A549 (cell line): ENCODE measurements at regions of chr3 and their contacts with region 1.

Region 1: DNA sequence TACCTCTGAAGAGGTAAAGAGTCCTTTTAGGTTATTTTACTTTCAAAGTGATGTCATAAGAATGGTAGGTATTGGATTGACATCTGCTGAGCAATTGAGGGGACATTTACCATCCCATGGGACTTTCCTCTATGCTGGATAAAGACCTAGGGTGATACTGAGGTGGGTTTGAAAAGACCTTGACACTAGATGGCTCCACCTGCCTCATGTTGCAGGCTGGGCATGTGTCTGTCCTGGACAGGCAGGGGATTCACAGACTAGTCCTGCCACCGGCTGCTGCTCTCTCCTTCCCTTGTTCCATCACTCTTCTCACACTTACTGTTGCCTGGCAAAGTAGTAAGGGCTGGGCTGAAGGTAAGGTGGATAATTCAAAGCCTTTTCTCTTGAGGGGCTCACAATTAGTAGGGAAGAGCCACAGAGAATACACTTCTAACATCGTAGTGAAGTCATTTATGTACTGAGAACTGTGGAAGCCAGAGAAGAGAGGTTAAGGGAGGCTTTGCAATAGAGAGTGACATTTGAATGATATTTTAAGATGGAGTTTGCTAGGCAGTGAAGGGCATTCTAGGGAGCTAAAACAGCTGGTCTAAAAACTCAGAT is 27.7 kb downstream of the TRAK1 start:
- DNase-seq: peak; percentile 63 to 72
- ATAC-seq: peak; percentile 94
- H3K4me3 ChIP-seq: no peak overlapping the region
- H3K27ac ChIP-seq: 0 out of 6 replicates have a peak overlapping the region, but pooled peaks of 1 of the 2 experiments have one; percentile 29
- H3K4me1 ChIP-seq: peaks cover 15% of the 10 kb centered on the region
- CTCF ChIP-seq: peak; percentile 63
- EP300 ChIP-seq: no peak
- POLR2A ChIP-seq: no peak
- RAD21 ChIP-seq: peak; percentile 70 to 78

Region 2: DNA sequence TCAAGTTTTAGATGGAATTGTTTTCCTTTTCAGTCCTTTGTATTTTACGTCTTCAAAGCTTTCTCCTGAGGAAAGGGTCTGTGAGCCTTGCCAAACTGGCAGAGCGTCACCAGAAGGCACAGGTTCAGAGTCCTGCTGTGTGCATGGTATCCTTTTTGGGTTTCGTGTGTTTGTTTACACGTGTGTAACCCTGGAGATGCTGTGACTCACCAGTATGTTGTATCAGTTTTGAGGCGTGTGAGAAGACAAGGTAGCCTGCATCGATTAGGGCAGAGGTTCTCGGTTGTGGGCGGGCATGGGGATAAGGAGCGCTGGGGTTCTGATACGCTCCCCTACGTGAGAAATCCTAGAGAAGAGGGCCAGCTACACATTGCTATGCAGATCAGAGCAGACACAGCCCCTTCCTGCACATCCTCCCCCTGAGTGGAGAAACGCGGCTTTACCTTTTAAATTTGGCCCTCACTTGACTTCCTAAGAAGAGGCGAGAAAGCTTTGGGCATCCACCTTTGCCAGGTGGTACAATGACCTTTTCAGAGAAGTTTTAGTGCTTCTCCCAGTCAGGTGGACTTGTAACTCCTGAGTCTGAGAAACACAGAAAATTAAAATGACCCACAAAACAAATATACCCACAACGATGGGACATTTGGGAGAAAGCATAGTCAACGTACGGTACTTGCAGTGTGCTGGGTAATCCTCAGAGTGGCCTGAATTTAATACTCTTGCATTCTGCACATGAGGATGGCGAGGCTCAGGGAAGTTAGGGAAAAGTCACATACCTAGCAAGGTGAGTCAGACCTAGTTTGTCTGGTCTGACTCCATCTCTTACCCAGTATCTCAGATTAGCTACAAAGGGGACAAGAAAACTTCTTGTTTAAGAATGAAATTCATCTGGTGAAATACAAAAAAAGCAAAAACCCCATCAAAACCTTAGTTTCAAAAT is 10.4 kb after region 1 on chr3:
- CTCF ChIA-PET with region 1: interaction called, 38 read pairs
- POLR2A ChIA-PET with region 1: no interaction called
- DNase-seq: peak; percentile 26 to 44
- ATAC-seq: peak; percentile 61 to 72; a peak in 5 of 6 replicates
- H3K4me3 ChIP-seq: no peak overlapping the region
- H3K27ac ChIP-seq: peak overlapping the region; percentile 70 to 76
- H3K4me1 ChIP-seq: peaks cover 35% of the 10 kb centered on the region
- CTCF ChIP-seq: no peak
- EP300 ChIP-seq: no peak
- POLR2A ChIP-seq: no peak
- RAD21 ChIP-seq: no peak

Region 3: DNA sequence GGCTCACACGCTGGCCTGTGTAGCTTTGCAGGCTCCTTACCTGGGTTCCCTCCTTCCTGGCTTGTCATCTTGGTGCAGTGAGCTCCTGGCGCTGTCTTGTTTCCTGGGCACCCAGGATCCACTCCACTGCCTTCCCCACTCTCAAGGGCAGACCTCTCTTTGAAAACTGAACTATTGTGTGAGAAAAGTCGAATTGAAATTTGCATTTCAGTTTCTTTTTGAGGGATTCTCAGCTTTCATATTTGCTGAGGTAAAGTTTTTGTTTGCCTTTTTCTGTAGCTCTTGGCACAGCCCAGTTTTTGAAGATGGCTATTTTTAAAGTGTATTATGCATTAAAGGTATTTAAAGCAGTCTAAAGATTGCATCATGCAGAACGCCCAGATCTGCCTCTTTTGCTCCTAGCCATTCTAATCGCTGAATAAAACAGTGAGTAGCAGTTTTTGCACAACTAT is 77.0 kb after region 1 on chr3:
- CTCF ChIA-PET with region 1: interaction called, 102 read pairs
- POLR2A ChIA-PET with region 1: interaction called, 3 read pairs
- DNase-seq: no peak
- ATAC-seq: no peak
- H3K4me3 ChIP-seq: no peak overlapping the region
- H3K27ac ChIP-seq: no peak overlapping the region; a peak in 1 of 6 replicates
- H3K4me1 ChIP-seq: no peaks in the 10 kb centered on the region
- CTCF ChIP-seq: no peak
- EP300 ChIP-seq: no peak
- POLR2A ChIP-seq: no peak
- RAD21 ChIP-seq: no peak

Region 4: DNA sequence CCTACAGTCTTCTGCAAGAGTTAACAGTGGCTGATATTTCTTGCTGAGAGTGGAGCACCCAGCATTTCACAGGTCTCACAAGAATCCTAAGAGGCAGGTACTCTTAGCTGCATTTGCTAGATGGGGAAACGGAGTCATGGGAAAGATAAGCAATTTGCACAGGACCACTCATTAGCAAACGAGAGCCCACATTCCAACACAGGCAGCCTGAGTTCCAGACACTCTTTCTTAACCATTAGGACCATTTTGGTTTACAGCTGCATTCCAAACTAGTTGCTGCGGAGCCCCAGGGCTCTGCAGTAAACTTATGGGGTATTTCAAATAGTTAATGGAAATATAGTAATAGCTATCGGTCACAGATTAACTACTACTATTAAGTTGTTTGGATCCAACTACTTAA is 249.0 kb after region 1 on chr3:
- CTCF ChIA-PET with region 1: no interaction called
- POLR2A ChIA-PET with region 1: no interaction called
- DNase-seq: no peak
- ATAC-seq: no peak
- H3K4me3 ChIP-seq: no peak overlapping the region
- H3K27ac ChIP-seq: no peak overlapping the region
- H3K4me1 ChIP-seq: no peaks in the 10 kb centered on the region
- CTCF ChIP-seq: no peak
- EP300 ChIP-seq: no peak
- POLR2A ChIP-seq: no peak
- RAD21 ChIP-seq: no peak